ENCODE measurements at regions of chr19 and their contacts with region 1.

Region 1: GRCh38 chr19:45927565-45928261 is 13.1 kb upstream of the NANOS2 start:
- DNase-seq: peak; percentile 96 to 97
- H3K4me3 ChIP-seq: peak overlapping the region; percentile 20
- H3K4me3 Mint-ChIP-seq: peak overlapping the region; percentile 68
- H3K27ac Mint-ChIP-seq: peak overlapping the region; percentile 13
- H3K4me1 ChIP-seq: peaks cover 5% of the 10 kb centered on the region
- H3K4me1 Mint-ChIP-seq: peaks cover 21% of the 10 kb centered on the region
- H3K27me3 ChIP-seq: no peaks in the 10 kb centered on the region
- H3K27me3 Mint-ChIP-seq: peaks cover 12% of the 10 kb centered on the region
- CTCF ChIP-seq: peak; percentile 13 to 20

Region 2: DNA sequence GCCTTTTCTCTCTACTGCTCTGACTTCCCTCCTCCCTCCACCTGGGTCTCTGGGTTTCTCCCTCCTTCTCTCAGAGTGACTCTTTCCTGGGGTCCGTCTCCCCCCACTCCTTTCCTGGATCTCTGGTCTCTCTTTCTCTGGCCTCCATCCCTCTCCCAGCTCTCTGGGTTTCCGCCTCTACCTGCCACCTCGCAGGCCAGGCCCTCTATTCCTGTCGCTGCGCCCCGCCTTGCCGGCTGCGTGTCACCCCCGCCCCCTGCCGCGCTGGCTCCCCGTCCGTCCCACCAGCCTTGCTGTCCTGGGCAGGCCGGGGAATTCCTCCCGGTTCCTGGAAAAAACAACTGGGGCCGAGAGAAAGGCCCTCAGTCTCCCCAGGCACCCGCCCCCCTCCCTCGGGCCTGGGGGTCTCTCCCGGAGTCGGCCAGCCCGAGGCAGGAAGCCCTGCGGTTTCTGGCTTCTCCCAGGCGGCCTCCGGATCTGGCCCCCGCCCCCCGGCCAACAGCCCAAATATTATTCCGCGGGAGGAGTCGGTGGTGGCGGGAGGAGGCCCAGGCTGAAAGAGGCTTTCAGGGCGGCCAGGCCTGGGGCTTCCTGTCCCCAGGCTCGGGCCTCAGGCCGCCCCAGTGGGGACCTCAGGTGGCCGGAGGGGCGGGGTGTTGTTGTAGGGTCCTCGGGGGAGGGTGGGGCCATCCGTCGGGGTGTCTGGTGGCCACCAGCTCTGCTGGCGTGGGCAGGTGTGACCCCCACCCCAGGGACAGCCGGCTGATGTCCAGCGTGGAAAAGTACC is 51.1 kb before region 1 on chr19:
- CTCF ChIA-PET with region 1: no interaction called
- POLR2A ChIA-PET with region 1: no interaction called
- intact Hi-C with region 1: no loop called
- DNase-seq: no peak
- H3K4me3 ChIP-seq: no peak overlapping the region
- H3K4me3 Mint-ChIP-seq: no peak overlapping the region
- H3K27ac Mint-ChIP-seq: no peak overlapping the region
- H3K4me1 ChIP-seq: peaks cover 55% of the 10 kb centered on the region
- H3K4me1 Mint-ChIP-seq: peaks cover 41% of the 10 kb centered on the region
- H3K27me3 ChIP-seq: no peaks in the 10 kb centered on the region
- H3K27me3 Mint-ChIP-seq: no peaks in the 10 kb centered on the region
- CTCF ChIP-seq: no peak

Region 3: DNA sequence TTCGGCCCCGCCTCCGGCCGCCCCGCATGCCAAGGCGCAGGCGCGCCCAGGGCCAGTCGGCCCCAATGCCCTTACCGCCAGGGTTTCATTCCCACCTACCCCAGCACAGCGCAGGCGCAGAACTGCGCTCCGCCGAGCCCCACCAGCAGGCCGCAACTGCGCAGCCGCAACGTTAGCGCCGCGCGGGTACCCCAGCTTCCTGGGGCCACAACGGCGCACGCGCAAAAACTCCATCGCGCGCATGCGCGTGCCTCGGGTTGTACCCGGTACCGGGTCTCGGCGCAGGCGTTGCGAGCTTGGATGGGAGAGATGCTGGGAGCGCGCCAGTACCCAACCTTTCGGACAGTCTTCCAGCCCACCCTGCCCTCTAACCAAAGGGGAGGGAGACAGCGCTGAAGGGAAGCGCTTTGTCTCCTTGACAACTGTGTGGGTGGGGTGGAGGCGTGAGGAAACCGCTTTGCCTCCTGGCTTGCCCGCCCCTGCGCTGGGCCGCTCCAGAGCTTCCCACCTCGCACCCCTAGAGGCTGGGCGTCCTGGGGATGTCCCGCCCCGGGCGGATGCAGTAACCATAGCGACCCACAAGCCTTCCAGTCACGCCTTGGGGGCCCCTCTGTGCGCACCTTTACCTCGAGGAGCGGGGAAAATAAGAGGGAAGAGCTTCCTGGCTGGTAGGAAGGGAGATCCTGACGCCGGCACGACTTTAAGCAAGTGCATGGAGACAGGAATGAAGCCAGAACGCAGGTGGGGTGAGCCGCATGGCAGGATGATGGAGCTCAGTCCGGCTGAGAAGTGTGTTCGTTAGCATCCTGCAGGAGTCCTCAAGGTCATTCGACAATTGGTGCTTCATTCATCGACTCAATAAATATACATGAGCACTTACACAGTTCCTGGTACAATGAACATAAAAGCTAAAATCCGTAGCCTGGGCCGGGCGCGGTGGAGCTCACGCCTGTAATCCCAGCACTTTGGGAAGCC is 24.8 kb before region 1 on chr19:
- CTCF ChIA-PET with region 1: interaction called, 7 read pairs
- POLR2A ChIA-PET with region 1: interaction called, 5 read pairs
- intact Hi-C with region 1: loop called (anchors 2 kb)
- DNase-seq: peak; percentile 98 to 100
- H3K4me3 ChIP-seq: peak overlapping the region; percentile 92
- H3K4me3 Mint-ChIP-seq: peak overlapping the region; percentile 80
- H3K27ac Mint-ChIP-seq: peak overlapping the region; percentile 65
- H3K4me1 ChIP-seq: peaks cover 5% of the 10 kb centered on the region
- H3K4me1 Mint-ChIP-seq: no peaks in the 10 kb centered on the region
- H3K27me3 ChIP-seq: no peaks in the 10 kb centered on the region
- H3K27me3 Mint-ChIP-seq: no peaks in the 10 kb centered on the region
- CTCF ChIP-seq: no peak

Region 4: DNA sequence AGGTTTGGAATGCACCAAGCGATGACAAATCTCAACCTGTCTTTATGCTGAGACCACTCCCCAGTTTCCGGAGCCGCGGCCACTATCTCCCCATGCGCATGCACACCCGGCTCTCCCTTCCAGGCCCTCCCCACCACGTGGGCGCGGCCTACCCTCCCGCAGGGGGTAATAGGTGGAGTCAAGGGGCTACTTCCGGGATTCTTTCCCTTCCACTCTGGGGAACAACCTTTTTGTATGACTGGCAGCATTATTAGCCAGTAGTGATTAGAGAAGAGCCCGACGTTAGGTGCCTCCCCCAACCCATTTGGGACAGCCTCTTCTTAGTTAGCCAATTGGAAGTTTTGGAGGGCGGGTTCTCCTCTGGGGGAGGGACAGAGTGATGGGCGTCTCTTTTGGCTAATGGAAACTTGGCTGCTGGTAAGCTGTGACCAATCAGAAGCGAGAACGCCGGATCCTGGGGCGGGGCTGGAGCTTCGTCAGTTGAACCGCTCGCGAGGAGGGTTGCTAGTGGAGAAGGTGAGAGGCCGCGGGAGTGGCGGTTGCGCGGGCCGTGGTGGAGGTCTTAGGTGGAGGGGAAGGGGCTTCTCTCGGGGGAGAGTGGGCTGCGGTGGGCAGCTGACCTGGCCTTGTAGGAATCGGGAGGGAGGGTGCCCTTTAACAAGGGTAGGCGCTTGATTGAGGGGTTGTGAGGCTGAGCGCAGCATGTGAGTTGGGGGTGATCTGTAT is 67.4 kb after region 1 on chr19 and contains the start of gene CCDC61:
- CTCF ChIA-PET with region 1: interaction called, 5 read pairs
- POLR2A ChIA-PET with region 1: interaction called, 3 read pairs
- intact Hi-C with region 1: loop called (anchors 5 kb)
- DNase-seq: peak; percentile 98 to 99
- H3K4me3 ChIP-seq: peak within 1 kb of the TSS; percentile 49
- H3K4me3 Mint-ChIP-seq: no peak within 1 kb of the TSS
- H3K27ac Mint-ChIP-seq: no peak within 1 kb of the TSS
- H3K4me1 ChIP-seq: no peaks in the 10 kb centered on the region
- H3K4me1 Mint-ChIP-seq: peaks cover 5% of the 10 kb centered on the region
- H3K27me3 ChIP-seq: no peaks in the 10 kb centered on the region
- H3K27me3 Mint-ChIP-seq: peaks cover 4% of the 10 kb centered on the region
- CTCF ChIP-seq: no peak
- total RNA-seq, gene CCDC61: 17.1 and 21.1 TPM in 2 replicates

Region 5: DNA sequence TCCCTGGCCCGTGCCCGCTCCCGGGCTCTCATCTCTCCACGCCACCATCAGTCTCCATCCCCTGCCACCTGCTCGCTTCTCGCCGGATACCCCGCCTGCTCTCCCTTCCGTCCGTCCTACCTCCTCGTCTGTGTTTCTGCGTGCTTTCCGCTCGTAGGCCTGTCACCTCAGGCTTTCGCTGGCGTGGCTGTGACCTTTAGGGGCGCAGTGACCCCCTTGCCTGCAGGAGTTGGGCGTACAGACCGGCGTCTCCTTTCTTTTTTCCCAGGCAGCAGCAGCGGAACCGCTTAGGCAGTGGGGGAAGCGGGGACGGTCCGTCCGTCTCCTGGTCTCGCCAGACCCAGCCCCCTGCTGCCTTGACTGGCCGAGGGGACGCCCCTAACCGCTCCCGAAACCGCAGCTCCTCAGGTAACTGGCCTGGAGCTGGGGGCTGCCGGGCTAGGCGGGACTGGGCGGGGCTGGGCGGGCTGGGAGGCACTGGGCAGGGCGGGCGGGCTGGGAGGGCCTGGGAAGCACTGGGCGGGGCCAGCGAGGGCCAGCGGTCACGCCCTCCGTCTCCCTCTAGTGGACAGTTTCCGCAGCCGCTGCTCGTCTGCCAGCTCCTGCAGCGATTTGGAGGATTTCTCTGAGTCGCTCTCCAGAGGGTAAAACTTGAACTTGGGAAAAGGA is 88.8 kb after region 1 on chr19:
- CTCF ChIA-PET with region 1: interaction called, 4 read pairs
- POLR2A ChIA-PET with region 1: no interaction called
- intact Hi-C with region 1: loop called (anchors 5 kb)
- DNase-seq: peak; percentile 78 to 91
- H3K4me3 ChIP-seq: peak overlapping the region; percentile 57
- H3K4me3 Mint-ChIP-seq: peak overlapping the region; percentile 86
- H3K27ac Mint-ChIP-seq: no peak overlapping the region
- H3K4me1 ChIP-seq: peaks cover 20% of the 10 kb centered on the region
- H3K4me1 Mint-ChIP-seq: peaks cover 21% of the 10 kb centered on the region
- H3K27me3 ChIP-seq: no peaks in the 10 kb centered on the region; the same call in 1 of the 2 replicates
- H3K27me3 Mint-ChIP-seq: peaks cover 8% of the 10 kb centered on the region
- CTCF ChIP-seq: peak; percentile 93 to 95